Aorta (tissue), 5 donors: ENCODE measurements at regions of chr9 and their contacts with region 1.

Region 1: DNA sequence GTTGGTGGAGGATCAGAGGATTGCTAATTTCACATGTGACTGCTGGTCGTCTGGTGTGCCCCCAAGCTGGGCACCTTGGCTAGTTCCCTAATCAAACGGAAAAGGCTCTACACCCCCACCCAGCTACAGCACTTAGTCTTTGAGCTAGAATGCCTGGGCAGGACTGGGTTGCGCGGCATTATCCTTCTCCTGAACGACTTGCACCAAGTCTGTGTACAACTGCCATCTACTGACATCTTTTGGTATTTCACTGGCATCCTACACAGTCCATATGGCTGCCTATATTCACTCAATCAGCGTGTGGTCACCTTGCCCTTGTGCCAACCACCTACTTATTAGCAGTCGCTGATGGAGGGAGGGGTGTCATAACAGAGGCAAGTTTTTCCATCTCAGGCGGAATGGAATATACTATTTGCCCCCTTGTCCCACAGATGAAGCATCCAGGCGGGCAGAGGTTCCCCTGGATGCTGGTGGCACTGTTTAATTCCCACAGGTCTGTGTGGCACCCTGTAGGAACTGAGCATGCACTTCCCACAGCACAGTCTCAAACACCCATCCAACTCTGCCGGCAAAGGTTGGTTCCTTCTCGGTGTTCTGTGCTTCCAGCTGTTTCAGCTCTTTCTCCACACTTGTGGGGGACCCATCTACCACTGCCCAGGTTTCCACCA is 150.1 kb downstream of the OSTF1 start:
- DNase-seq: peak in 1 of 2 donors; percentile 54
- ATAC-seq: peak; percentile 88
- H3K4me3 ChIP-seq: no peak overlapping the region
- H3K27ac ChIP-seq: no peak overlapping the region
- H3K4me1 ChIP-seq: no peaks in the 10 kb centered on the region
- H3K27me3 ChIP-seq: no peaks in the 10 kb centered on the region

Region 2: DNA sequence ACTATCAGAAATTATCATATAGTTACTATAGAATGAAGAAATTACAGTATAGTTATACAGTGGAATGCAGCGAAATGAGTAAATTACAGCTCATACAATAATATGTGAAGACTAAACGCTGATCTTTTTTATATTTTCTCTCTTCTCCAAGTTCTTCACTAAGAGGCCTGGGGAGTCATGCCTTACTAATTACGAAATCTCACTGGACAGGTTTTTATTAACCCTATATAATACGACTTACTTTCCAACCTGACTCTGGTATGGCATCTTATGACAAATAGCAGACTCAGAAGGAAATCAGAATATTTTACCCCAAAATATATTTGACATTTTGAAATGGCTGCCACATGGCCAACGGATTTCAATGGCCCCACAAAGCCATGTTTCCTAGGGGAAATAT is 219.4 kb before region 1 on chr9:
- intact Hi-C with region 1: no loop called
- DNase-seq: no peak
- ATAC-seq: no peak
- H3K4me3 ChIP-seq: no peak overlapping the region
- H3K27ac ChIP-seq: no peak overlapping the region
- H3K4me1 ChIP-seq: no peaks in the 10 kb centered on the region
- H3K27me3 ChIP-seq: no peaks in the 10 kb centered on the region

Region 3: GRCh38 chr9:75185585-75186170 is 52.8 kb before region 1 on chr9:
- intact Hi-C with region 1: loop called in 1 of 2 experiments (anchors 10 kb)
- DNase-seq: peak in 1 of 2 donors; percentile 57
- ATAC-seq: no peak
- H3K4me3 ChIP-seq: no peak overlapping the region
- H3K27ac ChIP-seq: no peak overlapping the region
- H3K4me1 ChIP-seq: no peaks in the 10 kb centered on the region
- H3K27me3 ChIP-seq: no peaks in the 10 kb centered on the region

Region 4: GRCh38 chr9:75200892-75201470 is 37.5 kb before region 1 on chr9:
- intact Hi-C with region 1: loop called (anchors 1 kb)
- DNase-seq: no peak
- ATAC-seq: no peak
- H3K4me3 ChIP-seq: no peak overlapping the region
- H3K27ac ChIP-seq: no peak overlapping the region
- H3K4me1 ChIP-seq: peaks cover 0 to 3% of the 10 kb centered on the region in 2 donors
- H3K27me3 ChIP-seq: no peaks in the 10 kb centered on the region

Region 5: DNA sequence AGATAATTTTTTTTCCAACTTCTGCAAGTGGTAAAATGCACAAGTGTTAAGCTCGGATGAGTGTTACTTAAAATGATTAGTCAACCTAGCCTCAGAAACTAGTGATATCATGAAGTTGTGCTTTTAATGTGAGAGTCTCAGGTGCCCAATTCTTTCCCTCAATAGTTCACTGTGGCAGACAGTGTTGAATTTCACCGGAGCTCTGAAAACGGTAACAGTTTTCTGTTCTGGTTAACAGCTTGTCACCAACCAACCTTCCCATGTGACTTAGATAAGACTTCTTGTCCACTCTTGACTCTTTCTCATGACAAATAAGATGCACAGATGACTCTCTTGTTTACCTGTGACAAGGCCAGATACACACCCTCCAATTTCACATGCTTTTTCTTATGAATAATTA is 24.7 kb before region 1 on chr9:
- intact Hi-C with region 1: no loop called
- DNase-seq: no peak
- ATAC-seq: no peak
- H3K4me3 ChIP-seq: no peak overlapping the region
- H3K27ac ChIP-seq: no peak overlapping the region
- H3K4me1 ChIP-seq: no peaks in the 10 kb centered on the region
- H3K27me3 ChIP-seq: no peaks in the 10 kb centered on the region

Region 6: DNA sequence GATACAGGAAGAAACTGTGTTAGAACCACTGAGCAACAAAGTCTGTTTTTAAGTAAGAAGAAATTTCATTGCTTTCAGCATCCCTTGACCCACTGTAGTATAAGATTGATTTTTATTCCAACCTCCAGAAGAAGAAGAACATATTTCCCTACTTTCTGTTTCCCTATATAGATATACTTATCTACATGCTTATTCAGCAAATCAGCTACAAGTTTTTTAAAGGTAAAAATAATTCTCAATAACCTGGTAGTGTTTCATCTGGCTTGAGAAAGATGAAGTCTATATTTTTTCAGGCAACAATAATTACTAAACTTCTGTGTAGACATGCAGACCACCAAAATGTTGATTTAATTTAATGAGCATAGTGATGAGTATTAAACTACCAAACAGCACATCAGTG is 50.9 kb after region 1 on chr9:
- intact Hi-C with region 1: no loop called
- DNase-seq: no peak
- ATAC-seq: no peak
- H3K4me3 ChIP-seq: no peak overlapping the region
- H3K27ac ChIP-seq: no peak overlapping the region
- H3K4me1 ChIP-seq: no peaks in the 10 kb centered on the region
- H3K27me3 ChIP-seq: no peaks in the 10 kb centered on the region

Region 7: GRCh38 chr9:75712700-75713099 is 474.3 kb after region 1 on chr9:
- intact Hi-C with region 1: no loop called
- DNase-seq: no peak
- ATAC-seq: no peak
- H3K4me3 ChIP-seq: no peak overlapping the region
- H3K27ac ChIP-seq: no peak overlapping the region
- H3K4me1 ChIP-seq: peaks cover 0 to 2% of the 10 kb centered on the region in 2 donors
- H3K27me3 ChIP-seq: no peaks in the 10 kb centered on the region